ENCODE measurements at regions of chr12 and their contacts with region 1.

Region 1: DNA sequence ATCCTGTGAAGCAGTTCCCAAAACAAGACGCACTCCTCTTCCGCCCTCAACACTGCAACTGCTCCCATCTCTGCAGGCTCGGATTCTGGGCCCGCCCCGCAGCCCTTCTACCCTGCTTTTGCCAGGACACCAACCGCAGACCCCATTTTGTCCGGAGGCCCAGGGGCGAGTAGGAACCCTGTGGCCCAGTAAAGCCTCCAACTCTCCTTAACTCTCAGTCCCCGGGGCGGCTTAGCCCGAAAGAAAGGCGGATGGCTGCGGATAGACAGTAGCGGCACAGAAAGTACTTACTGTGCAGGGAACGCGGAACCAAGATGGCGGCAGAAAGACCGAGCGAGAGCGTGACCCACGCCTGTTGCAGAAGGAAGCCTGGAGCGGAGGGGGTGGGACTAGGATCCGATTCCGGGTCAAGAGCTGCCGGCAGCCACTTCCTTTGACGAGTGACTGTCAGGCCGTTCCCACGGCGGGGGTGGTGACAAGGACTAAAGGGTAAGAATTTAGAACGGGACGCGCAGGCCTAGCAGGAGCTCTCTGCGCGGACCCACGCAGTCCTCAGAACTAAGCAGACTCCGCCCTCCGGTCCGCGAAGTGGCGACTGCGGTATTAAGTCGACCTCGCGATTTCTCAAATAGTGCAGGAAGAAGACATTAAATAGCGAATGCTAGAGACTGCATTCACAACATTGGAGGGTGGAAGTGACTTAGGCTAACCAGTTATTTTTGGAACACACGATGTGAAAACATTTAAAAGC is at the start of gene NACA:
- DNase-seq: peak; percentile 99
- ATAC-seq: peak; percentile 90 to 93 (median 90)
- H3K4me3 ChIP-seq: peak within 1 kb of the TSS; percentile 86
- H3K27ac ChIP-seq: peak within 1 kb of the TSS; percentile 93
- H3K4me1 ChIP-seq: peaks cover 35% of the 10 kb centered on the region
- H3K27me3 ChIP-seq: no peaks in the 10 kb centered on the region
- CTCF ChIP-seq: no peak
- total RNA-seq, gene NACA: 434 to 719 (median 530) TPM

Region 2: DNA sequence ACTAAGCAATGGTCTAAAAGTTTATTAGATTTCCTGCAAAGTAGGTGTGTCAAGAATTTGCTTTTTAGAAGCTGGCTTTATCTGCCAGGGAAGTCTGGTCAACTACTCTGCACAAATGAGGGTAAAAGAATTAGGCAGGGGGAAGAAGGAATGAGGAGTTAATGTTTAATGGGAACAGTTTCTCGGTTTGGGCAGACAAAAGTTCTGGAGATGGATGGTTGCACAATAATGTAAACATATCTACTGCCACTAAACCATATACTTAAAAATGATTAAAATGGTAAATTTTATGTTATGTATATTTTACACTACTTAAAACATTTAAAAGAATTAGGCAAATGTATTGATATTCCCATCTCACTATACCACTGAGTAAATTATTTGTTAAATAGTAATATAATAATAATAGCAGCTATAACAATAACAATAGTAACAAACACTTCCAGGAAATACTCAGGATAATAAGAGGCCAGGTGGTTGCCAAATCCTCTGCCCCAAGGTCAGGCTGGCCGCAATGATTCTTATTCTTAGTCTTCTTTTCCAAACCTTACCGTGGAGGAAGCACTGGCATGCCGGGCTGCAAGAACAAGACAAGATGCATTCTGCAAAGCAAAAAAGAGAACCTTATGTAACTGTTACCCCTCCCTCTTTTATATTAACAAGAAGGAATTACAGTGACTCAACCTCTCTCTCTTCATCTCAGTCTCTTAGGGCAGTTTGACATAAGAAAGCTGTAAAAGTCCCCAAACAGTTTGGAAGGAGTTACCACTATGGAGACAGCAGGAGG is 438.9 kb before region 1 on chr12:
- intact Hi-C with region 1: no loop called
- DNase-seq: no peak
- ATAC-seq: peak in 1 of 4 donors; percentile 33
- H3K4me3 ChIP-seq: no peak overlapping the region
- H3K27ac ChIP-seq: peak overlapping the region; percentile 46
- H3K4me1 ChIP-seq: peaks cover 14% of the 10 kb centered on the region
- H3K27me3 ChIP-seq: no peaks in the 10 kb centered on the region
- CTCF ChIP-seq: no peak

Region 3: DNA sequence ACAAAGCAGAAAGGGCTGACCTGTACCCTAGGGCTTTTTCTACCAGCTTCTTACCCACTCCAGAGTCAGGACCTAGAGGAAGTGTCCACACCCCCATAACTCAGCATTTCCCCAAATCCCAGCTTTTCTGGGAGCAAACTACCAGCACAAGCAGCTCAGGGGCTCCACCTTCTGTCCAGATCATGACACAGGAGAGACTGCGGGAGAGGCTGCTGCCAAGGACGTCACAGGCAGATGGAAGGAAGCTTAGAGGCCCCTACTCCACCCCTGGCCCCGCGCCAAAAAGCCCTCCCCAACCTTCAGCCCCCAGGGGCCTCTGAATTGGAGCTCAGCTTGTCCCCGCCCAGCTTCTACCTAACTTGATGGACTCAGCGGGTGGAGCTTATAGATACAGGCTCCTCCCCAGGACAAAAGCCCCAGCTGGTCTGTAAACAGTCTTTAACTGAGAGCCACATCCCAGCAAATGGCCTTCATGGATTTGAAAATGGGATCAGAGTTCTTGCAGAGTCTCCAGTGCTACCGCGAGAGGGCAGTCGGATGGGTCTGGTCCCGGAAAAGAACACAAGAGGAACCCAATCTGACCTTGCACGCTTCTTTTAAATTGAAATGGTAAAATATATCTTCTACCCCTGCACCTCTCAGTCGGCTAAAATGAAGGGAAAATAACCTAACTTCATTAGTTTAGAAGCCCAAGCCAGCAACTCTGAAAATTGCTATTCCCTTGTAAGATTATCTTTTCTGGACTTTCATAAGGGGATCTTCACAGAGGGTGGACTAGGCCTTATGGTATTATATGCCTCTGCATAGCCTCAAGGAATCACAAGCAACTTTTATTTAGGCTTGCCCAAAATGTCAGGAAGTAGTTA is 88.2 kb before region 1 on chr12:
- intact Hi-C with region 1: loop called in 1 of 2 experiments (anchors 5 kb)
- DNase-seq: peak; percentile 99
- ATAC-seq: peak; percentile 80 to 82 (median 81)
- H3K4me3 ChIP-seq: peak overlapping the region; percentile 77
- H3K27ac ChIP-seq: peak overlapping the region; percentile 90
- H3K4me1 ChIP-seq: peaks cover 45% of the 10 kb centered on the region
- H3K27me3 ChIP-seq: no peaks in the 10 kb centered on the region
- CTCF ChIP-seq: peak; percentile 56

Region 4: GRCh38 chr12:56645717-56646446 is 79.3 kb before region 1 on chr12 and contains the start of gene ATP5F1B:
- intact Hi-C with region 1: loop called in 1 of 2 experiments (anchors 2 kb)
- DNase-seq: peak; percentile 93 to 96
- ATAC-seq: peak; percentile 97 to 98 (median 98)
- H3K4me3 ChIP-seq: peak within 1 kb of the TSS; percentile 99
- H3K27ac ChIP-seq: peak within 1 kb of the TSS; percentile 98
- H3K4me1 ChIP-seq: peaks cover 29% of the 10 kb centered on the region
- H3K27me3 ChIP-seq: no peaks in the 10 kb centered on the region
- CTCF ChIP-seq: no peak
- total RNA-seq, gene ATP5F1B: 1,044 to 2,377 (median 1,300) TPM

Region 5: GRCh38 chr12:56688129-56688845 is 36.9 kb before region 1 on chr12 and contains the start of gene PTGES3:
- intact Hi-C with region 1: loop called (anchors 2 to 5 kb)
- DNase-seq: peak; percentile 98
- ATAC-seq: peak; percentile 93 to 95 (median 94)
- H3K4me3 ChIP-seq: peak within 1 kb of the TSS; percentile 94
- H3K27ac ChIP-seq: peak within 1 kb of the TSS; percentile 99
- H3K4me1 ChIP-seq: peaks cover 23% of the 10 kb centered on the region
- H3K27me3 ChIP-seq: no peaks in the 10 kb centered on the region
- CTCF ChIP-seq: no peak
- total RNA-seq, gene PTGES3: 118 to 192 (median 148) TPM

Region 6: GRCh38 chr12:56785141-56785865 is 60.2 kb after region 1 on chr12:
- intact Hi-C with region 1: no loop called
- DNase-seq: no peak
- ATAC-seq: no peak
- H3K4me3 ChIP-seq: no peak overlapping the region
- H3K27ac ChIP-seq: no peak overlapping the region
- H3K4me1 ChIP-seq: no peaks in the 10 kb centered on the region
- H3K27me3 ChIP-seq: no peaks in the 10 kb centered on the region
- CTCF ChIP-seq: no peak